ENCODE measurements at regions of chr7 and their contacts with region 1.

Region 1: DNA sequence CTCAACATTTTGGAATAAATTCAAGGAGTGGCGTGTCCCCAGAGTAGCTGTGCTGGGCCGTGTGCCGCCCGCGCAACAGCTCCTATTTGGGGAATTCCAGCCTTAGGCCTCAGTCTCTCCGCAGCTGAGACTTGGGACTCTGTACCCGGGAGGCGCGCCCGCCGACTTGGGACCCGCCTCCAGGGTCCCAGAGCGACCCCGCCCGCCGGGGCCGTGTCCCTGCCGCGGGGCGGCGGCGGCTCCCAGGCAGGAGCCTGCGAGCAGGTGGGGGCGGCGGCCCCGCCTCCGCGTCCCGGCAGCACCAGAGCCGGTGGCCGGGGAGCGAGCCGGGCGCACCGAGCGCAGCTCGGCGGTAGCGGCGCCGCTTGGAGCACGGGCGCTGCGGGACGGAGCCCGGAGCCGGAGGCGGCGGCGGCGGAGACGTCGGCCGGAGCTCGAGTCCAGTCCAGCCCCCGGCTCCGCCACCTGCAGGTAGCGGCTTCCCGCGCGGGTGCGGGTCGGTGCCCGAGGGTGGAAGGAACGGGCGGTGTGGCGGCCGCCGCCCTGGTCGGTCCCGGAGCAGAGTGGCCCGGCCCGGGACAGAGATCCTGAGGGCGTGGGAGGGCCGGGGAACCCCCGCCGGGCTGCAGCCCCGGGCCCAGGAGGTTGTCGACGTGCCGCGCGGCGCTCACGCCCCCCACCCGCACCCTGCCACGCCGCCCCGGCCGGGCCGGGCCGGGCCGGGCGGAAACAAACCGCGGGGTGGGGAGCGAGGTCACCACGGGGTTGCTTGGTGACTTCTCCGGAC is at the start of gene WIPF3:
- DNase-seq: peak in 1 of 2 donors; percentile 56
- ATAC-seq: peak; percentile 55 to 59
- H3K4me3 ChIP-seq: peak within 1 kb of the TSS; percentile 59 to 82 (median 72)
- H3K27ac ChIP-seq: peak within 1 kb of the TSS; percentile 84 to 96 (median 94)
- H3K4me1 ChIP-seq: peaks cover 33 to 35% of the 10 kb centered on the region in 2 donors
- H3K27me3 ChIP-seq: no peaks in the 10 kb centered on the region
- CTCF ChIP-seq: peak in 2 of 5 experiments; percentile 19 to 29
- POLR2A ChIP-seq: peak; percentile 73 to 80
- total RNA-seq, gene WIPF3: 4.2 to 9.9 (median 8.3) TPM

Region 2: DNA sequence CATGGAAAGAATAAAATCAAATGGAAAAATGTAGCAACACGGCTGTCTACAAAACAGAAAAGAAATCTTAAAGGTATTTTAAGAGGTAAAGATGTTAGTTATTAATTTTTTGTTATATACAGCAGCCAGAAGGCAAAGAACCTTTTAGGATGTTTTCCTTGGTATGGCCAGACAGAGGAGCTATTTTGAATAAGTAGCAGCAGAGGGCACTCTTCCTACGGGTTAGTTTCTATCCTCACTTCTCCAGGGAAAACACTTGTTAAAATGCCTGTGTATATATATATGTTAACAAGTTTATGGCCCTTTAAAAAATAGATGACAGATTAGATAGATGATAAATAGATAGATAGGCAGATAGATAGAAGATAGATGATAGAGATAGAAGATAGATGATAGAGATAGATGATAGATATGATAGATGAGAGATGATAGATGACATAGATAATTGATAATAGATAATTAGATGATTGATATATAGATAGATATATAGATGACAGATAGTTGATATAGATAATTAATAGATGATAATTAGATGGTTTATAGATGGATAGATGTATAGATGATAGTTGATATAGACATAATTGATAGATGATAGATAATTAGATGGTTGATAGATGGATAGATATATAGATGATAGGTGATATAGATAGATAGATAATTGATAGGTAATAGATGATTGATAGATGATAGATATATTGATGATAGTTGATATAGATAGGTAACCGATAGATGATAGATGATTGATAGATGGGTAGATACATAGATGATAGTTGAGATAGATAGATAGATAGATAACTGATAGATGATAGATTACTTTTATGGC is 57.9 kb before region 1 on chr7:
- in situ Hi-C with region 1: no loop called
- intact Hi-C with region 1: loop called (anchors 5 kb)
- DNase-seq: no peak
- ATAC-seq: peak; percentile 82 to 93
- H3K4me3 ChIP-seq: no peak overlapping the region
- H3K27ac ChIP-seq: no peak overlapping the region
- H3K4me1 ChIP-seq: no peaks in the 10 kb centered on the region
- H3K27me3 ChIP-seq: no peaks in the 10 kb centered on the region
- CTCF ChIP-seq: peak in 4 of 5 experiments; percentile 27 to 66 (median 50)
- POLR2A ChIP-seq: no peak

Region 3: DNA sequence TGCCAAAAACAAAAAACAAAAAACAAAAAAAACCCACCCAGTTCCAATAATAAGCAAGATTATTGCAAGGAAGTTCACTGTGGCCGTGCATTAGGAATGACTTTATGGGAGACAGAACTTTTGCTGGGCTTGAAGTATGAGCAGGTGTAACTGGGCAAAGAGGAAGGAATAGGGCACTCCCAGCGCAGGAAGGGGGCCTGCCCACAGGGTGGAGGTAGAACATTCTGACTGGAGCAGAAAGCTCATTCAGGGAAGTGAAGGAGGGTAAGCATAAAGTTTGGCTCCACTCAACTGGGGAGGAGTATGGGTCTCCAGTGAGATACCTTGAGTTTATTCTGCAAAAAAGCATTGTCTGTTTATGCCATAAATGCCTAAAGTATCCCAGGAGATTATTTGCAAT is 42.2 kb before region 1 on chr7:
- in situ Hi-C with region 1: no loop called
- intact Hi-C with region 1: loop called (anchors 1 kb)
- DNase-seq: peak in 1 of 2 donors; percentile 23
- ATAC-seq: peak; percentile 48 to 60
- H3K4me3 ChIP-seq: no peak overlapping the region
- H3K27ac ChIP-seq: no peak overlapping the region
- H3K4me1 ChIP-seq: peaks cover 10 to 20% of the 10 kb centered on the region in 2 donors
- H3K27me3 ChIP-seq: no peaks in the 10 kb centered on the region
- CTCF ChIP-seq: peak in 4 of 5 experiments; percentile 31 to 39 (median 34)
- POLR2A ChIP-seq: no peak

Region 4: GRCh38 chr7:29780346-29780745 is 26.1 kb before region 1 on chr7:
- in situ Hi-C with region 1: no loop called
- intact Hi-C with region 1: loop called (anchors 2 kb)
- DNase-seq: peak; percentile 6 to 17
- ATAC-seq: peak; percentile 93 to 96
- H3K4me3 ChIP-seq: no peak overlapping the region
- H3K27ac ChIP-seq: peak overlapping the region in 3 of 4 donors; percentile 20 to 61 (median 20)
- H3K4me1 ChIP-seq: no peaks in the 10 kb centered on the region
- H3K27me3 ChIP-seq: no peaks in the 10 kb centered on the region
- CTCF ChIP-seq: no peak
- POLR2A ChIP-seq: no peak

Region 5: GRCh38 chr7:29854257-29854938 is 48.0 kb after region 1 on chr7:
- in situ Hi-C with region 1: no loop called
- intact Hi-C with region 1: loop called (anchors 2 kb)
- DNase-seq: peak in 1 of 2 donors; percentile 27
- ATAC-seq: no peak
- H3K4me3 ChIP-seq: no peak overlapping the region
- H3K27ac ChIP-seq: peak overlapping the region; percentile 82 to 96 (median 92)
- H3K4me1 ChIP-seq: peaks cover 54 to 73% of the 10 kb centered on the region in 2 donors
- H3K27me3 ChIP-seq: no peaks in the 10 kb centered on the region
- CTCF ChIP-seq: peak in 2 of 5 experiments; percentile 19 to 32
- POLR2A ChIP-seq: no peak

Region 6: DNA sequence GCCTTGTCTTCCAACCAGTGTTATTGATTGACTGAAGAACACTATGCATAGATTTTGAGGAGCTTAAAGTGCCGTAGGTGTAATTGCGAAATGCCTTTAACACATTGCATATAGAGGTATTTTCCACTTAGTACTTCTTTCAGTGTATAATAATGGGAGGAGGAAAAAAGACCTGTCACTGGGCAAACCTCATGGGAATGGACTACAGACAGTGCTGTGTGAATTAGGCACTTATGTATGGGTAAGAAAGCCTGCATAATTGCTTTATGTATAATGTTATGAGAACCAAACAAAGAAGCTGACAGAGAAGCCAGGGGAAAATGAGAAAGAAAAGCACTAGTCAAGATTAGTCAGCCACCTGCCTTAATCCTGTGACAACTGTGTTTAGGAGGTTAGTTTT is 195.6 kb after region 1 on chr7:
- in situ Hi-C with region 1: no loop called
- intact Hi-C with region 1: no loop called
- DNase-seq: no peak
- ATAC-seq: no peak
- H3K4me3 ChIP-seq: no peak overlapping the region
- H3K27ac ChIP-seq: no peak overlapping the region
- H3K4me1 ChIP-seq: no peaks in the 10 kb centered on the region
- H3K27me3 ChIP-seq: no peaks in the 10 kb centered on the region
- CTCF ChIP-seq: no peak
- POLR2A ChIP-seq: no peak

Measured in gastrocnemius medialis (tissue), 4 donors.